T-cell (primary cell): ENCODE measurements at regions of chr16 and their contacts with region 1.

Region 1: DNA sequence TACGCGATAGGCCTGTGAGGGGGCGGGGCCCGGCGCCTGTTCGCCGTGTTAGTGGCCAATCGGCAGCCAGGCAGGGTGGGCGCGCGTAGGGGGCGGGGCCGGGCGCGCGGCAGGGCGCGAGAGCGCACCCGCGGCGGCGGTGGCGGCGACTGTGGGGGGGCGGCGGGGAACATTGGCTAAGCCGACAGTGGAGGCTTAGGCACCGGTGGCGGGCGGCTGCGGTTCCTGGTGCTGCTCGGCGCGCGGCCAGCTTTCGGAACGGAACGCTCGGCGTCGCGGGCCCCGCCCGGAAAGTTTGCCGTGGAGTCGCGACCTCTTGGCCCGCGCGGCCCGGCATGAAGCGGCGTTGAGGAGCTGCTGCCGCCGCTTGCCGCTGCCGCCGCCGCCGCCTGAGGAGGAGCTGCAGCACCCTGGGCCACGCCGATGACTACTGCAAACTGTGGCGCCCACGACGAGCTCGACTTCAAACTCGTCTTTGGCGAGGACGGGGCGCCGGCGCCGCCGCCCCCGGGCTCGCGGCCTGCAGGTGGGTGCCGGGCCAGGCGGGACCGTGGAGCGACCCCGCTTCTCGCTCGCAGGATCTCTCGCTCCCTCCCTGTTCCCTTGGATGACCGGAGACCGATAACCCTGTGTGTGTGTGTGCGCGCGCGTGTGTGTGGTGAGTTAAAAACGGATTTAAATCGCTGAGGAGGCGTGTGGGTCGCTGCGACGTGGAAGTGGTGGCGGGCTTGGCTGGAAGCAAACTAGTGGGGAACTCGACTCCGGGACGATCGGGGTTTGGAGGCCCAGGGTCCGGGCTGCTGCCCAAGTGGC is at the start of gene NFATC3:
- DNase-seq: peak; percentile 96 to 100 (median 99)
- ATAC-seq: peak; percentile 80 to 87 (median 83)
- H3K4me3 ChIP-seq: peak within 1 kb of the TSS; percentile 79 to 90
- H3K4me3 Mint-ChIP-seq: peak within 1 kb of the TSS; percentile 83 to 87 (median 85)
- H3K27ac ChIP-seq: peak within 1 kb of the TSS; percentile 86
- H3K27ac Mint-ChIP-seq: peak within 1 kb of the TSS; percentile 93 to 97
- H3K4me1 ChIP-seq: peaks cover 49 to 51% of the 10 kb centered on the region in 2 experiments
- H3K4me1 Mint-ChIP-seq: peaks cover 65 to 72% (median 72%) of the 10 kb centered on the region in 3 donors
- H3K27me3 ChIP-seq: no peaks in the 10 kb centered on the region
- H3K27me3 Mint-ChIP-seq: no peaks in the 10 kb centered on the region
- total RNA-seq, gene NFATC3: 111 to 144 (median 116) TPM

Region 2: DNA sequence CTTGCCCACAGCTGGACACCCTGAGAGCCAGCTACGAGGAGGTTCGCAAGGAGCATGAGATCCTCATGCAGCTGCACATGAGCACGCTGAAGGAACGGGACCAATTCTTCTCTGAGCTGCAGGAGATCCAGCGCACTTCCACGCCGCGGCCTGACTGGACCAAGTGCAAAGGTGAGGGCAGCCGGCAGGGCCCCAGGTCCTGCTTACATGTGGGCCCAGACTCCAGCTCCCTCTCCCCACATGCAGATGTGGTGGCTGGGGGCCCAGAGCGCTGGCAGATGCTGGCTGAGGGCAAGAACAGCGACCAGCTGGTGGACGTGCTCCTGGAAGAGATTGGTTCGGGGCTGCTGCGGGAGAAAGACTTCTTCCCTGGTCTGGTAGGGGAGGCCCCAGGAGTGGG is 259.6 kb before region 1 on chr16:
- CTCF ChIA-PET with region 1: no interaction called
- POLR2A ChIA-PET with region 1: interaction called in 1 of 2 experiments, 14 read pairs
- DNase-seq: no peak
- ATAC-seq: no peak
- H3K4me3 ChIP-seq: no peak overlapping the region
- H3K4me3 Mint-ChIP-seq: no peak overlapping the region
- H3K27ac ChIP-seq: no peak overlapping the region
- H3K27ac Mint-ChIP-seq: no peak overlapping the region
- H3K4me1 ChIP-seq: no peaks in the 10 kb centered on the region
- H3K4me1 Mint-ChIP-seq: no peaks in the 10 kb centered on the region
- H3K27me3 ChIP-seq: no peaks in the 10 kb centered on the region
- H3K27me3 Mint-ChIP-seq: no peaks in the 10 kb centered on the region

Region 3: GRCh38 chr16:68049449-68049848 is 36.0 kb before region 1 on chr16:
- CTCF ChIA-PET with region 1: no interaction called
- POLR2A ChIA-PET with region 1: no interaction called
- DNase-seq: no peak
- ATAC-seq: no peak
- H3K4me3 ChIP-seq: no peak overlapping the region
- H3K4me3 Mint-ChIP-seq: no peak overlapping the region
- H3K27ac ChIP-seq: no peak overlapping the region
- H3K27ac Mint-ChIP-seq: no peak overlapping the region
- H3K4me1 ChIP-seq: no peaks in the 10 kb centered on the region
- H3K4me1 Mint-ChIP-seq: peaks cover 4 to 9% (median 5%) of the 10 kb centered on the region in 3 donors
- H3K27me3 ChIP-seq: no peaks in the 10 kb centered on the region
- H3K27me3 Mint-ChIP-seq: no peaks in the 10 kb centered on the region

Region 4: GRCh38 chr16:68064791-68065365 is 20.6 kb before region 1 on chr16:
- CTCF ChIA-PET with region 1: interaction called in 1 of 2 experiments, 13 read pairs
- POLR2A ChIA-PET with region 1: interaction called, 3 to 5 read pairs
- DNase-seq: peak; percentile 37 to 78 (median 64)
- ATAC-seq: peak; percentile 74 to 79 (median 78)
- H3K4me3 ChIP-seq: no peak overlapping the region
- H3K4me3 Mint-ChIP-seq: peak overlapping the region in 1 of 3 donors; percentile 15
- H3K27ac ChIP-seq: peak overlapping the region; percentile 54
- H3K27ac Mint-ChIP-seq: peak overlapping the region; percentile 81 to 85
- H3K4me1 ChIP-seq: peaks cover 31 to 85% of the 10 kb centered on the region in 2 experiments
- H3K4me1 Mint-ChIP-seq: peaks cover 70 to 83% (median 77%) of the 10 kb centered on the region in 3 donors
- H3K27me3 ChIP-seq: no peaks in the 10 kb centered on the region
- H3K27me3 Mint-ChIP-seq: no peaks in the 10 kb centered on the region

Region 5: GRCh38 chr16:68072038-68072695 is 13.3 kb before region 1 on chr16:
- CTCF ChIA-PET with region 1: interaction called, 3 to 17 read pairs
- POLR2A ChIA-PET with region 1: interaction called, 4 read pairs
- DNase-seq: no peak
- ATAC-seq: no peak
- H3K4me3 ChIP-seq: no peak overlapping the region
- H3K4me3 Mint-ChIP-seq: no peak overlapping the region
- H3K27ac ChIP-seq: peak overlapping the region; percentile 72
- H3K27ac Mint-ChIP-seq: peak overlapping the region; percentile 44 to 90
- H3K4me1 ChIP-seq: peaks cover 45 to 89% of the 10 kb centered on the region in 2 experiments
- H3K4me1 Mint-ChIP-seq: peaks cover 78 to 88% (median 86%) of the 10 kb centered on the region in 3 donors
- H3K27me3 ChIP-seq: no peaks in the 10 kb centered on the region
- H3K27me3 Mint-ChIP-seq: no peaks in the 10 kb centered on the region